Dorsolateral prefrontal cortex (tissue), 120 donors: ENCODE measurements at regions of chr2 and their contacts with region 1.

Region 1: GRCh38 chr2:120670771-120671480 is 64.7 kb upstream of the GLI2 start:
- DNase-seq: peak in 1 of 10 donors; percentile 25
- H3K4me3 ChIP-seq: no peak overlapping the region
- H3K27ac ChIP-seq: no peak overlapping the region
- H3K27me3 ChIP-seq: peaks cover 0 to 51% (median 9%) of the 10 kb centered on the region in 45 donors
- CTCF ChIP-seq: no peak

Region 2: DNA sequence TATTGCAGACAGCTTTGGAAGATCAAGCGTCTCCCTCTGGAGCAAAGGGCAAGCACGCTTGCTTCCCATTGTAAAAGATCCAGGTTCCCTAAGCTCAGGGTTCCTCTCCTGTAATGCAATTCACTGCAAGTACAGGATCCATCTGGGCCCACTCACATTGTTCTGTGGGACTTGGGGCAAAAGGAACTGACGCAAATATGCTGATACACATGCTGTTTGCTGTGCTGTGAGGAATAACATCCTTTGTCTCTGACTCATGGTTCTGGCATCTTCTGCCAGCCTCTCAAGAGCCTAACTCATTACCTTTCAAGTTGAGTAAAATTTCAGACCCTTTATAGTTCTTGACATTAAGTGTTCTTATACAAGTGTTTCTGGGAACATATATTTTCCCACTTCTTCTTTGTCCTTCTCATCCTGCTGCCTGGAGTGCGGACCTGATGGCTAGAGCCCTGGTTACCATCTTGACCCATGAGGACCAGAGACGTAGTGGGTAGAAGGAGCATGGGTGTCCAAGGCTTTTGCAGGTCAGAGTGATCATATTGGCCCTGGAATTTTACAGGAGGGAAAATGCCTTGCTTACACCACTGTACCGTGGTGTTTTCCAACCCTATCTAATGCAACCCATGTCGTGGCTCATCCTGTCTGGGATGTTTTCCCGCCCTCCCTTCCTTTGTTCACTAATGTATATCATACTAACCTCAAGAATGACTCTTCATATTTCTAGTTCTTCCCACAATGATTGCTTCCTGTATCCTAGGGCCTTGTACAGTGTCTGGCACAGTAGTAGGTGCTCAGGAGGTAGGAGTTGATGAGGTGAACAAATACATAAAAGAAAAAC is 80.9 kb before region 1 on chr2:
- intact Hi-C with region 1: loop called (anchors 2 to 5 kb)
- DNase-seq: no peak
- H3K4me3 ChIP-seq: no peak overlapping the region
- H3K27ac ChIP-seq: no peak overlapping the region
- H3K27me3 ChIP-seq: peaks cover 0 to 15% (median 0%) of the 10 kb centered on the region in 45 donors
- CTCF ChIP-seq: no peak

Region 3: GRCh38 chr2:120656273-120656950 is 14.5 kb before region 1 on chr2:
- intact Hi-C with region 1: no loop called
- DNase-seq: peak in 1 of 10 donors; percentile 43
- H3K4me3 ChIP-seq: no peak overlapping the region
- H3K27ac ChIP-seq: no peak overlapping the region
- H3K27me3 ChIP-seq: peaks cover 0 to 27% (median 8%) of the 10 kb centered on the region in 45 donors
- CTCF ChIP-seq: no peak

Region 4: GRCh38 chr2:120729406-120730399 is 58.8 kb after region 1 on chr2:
- intact Hi-C with region 1: no loop called
- DNase-seq: no peak
- H3K4me3 ChIP-seq: no peak overlapping the region
- H3K27ac ChIP-seq: no peak overlapping the region
- H3K27me3 ChIP-seq: peaks cover 0 to 24% (median 6%) of the 10 kb centered on the region in 45 donors
- CTCF ChIP-seq: no peak